CD4-positive, alpha-beta T cell (primary cell): ENCODE measurements at regions of chr20 and their contacts with region 1.

Region 1: GRCh38 chr20:44720617-44720993 is 5.4 kb downstream of the CCN5 start:
- DNase-seq: no peak
- ATAC-seq: no peak
- H3K4me3 ChIP-seq: no peak overlapping the region
- H3K4me3 Mint-ChIP-seq: no peak overlapping the region
- H3K27ac ChIP-seq: no peak overlapping the region
- H3K27ac Mint-ChIP-seq: no peak overlapping the region
- H3K4me1 ChIP-seq: no peaks in the 10 kb centered on the region
- H3K4me1 Mint-ChIP-seq: no peaks in the 10 kb centered on the region
- H3K27me3 ChIP-seq: no peaks in the 10 kb centered on the region
- H3K27me3 Mint-ChIP-seq: no peaks in the 10 kb centered on the region
- CTCF ChIP-seq: no peak

Region 2: DNA sequence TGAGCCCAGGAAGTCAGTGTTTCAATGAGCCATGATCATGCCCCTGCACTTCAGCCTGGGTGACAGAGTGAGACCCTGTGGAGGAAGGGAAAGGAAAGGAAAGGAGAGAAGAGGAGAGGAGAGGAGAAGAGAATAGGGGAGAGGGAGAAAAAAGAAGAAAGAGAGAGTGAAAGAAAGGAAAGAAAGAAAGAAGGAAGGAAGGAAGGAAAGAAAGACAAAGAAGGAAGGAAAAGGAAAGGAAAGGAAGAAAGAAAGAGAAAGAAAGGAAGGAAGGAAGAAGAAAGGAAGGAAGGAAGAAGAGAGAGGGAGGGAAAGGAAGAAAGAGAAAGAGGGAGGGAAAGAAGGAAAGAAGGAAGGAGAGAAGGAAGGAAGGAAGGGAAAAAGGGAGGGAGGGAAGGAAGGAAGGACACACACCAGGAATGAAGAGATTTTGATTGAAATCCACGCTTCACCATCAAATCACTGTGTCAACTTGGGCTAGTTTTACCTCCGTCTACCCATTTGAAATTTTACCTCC is 844.2 kb after region 1 on chr20:
- CTCF ChIA-PET with region 1: no interaction called
- POLR2A ChIA-PET with region 1: no interaction called
- intact Hi-C with region 1: loop called in 1 of 2 experiments (anchors 5 kb)
- DNase-seq: no peak
- ATAC-seq: no peak
- H3K4me3 ChIP-seq: no peak overlapping the region
- H3K4me3 Mint-ChIP-seq: no peak overlapping the region
- H3K27ac ChIP-seq: no peak overlapping the region
- H3K27ac Mint-ChIP-seq: no peak overlapping the region
- H3K4me1 ChIP-seq: no peaks in the 10 kb centered on the region
- H3K4me1 Mint-ChIP-seq: no peaks in the 10 kb centered on the region
- H3K27me3 ChIP-seq: peaks cover 0 to 12% of the 10 kb centered on the region in 2 experiments
- H3K27me3 Mint-ChIP-seq: peaks cover 42% of the 10 kb centered on the region
- CTCF ChIP-seq: no peak